Breast epithelium (tissue), 4 donors: ENCODE measurements at regions of chr10 and their contacts with region 1.

Region 1: DNA sequence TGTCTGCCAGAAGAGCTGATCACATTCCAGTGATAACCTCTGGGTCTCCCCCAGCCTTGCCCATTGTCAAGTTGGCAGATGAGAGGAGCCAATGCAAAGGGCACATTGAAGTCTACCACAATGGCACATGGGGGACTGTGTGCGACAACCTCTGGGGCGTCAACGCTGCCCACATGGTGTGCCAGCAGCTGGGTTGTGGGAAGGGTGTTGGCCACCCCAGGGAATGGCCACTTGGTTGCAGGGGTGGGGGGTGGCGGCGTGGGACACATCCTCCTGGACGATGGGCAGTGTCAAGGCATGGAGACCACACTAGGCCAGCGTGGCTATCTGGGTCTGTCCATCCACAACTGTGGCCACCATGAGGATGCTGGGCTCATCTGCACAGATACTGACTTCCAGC is 43.4 kb downstream of the CUZD1 start:
- DNase-seq: no peak
- H3K4me3 ChIP-seq: no peak overlapping the region
- H3K27ac ChIP-seq: no peak overlapping the region
- H3K4me1 ChIP-seq: no peaks in the 10 kb centered on the region
- H3K27me3 ChIP-seq: no peaks in the 10 kb centered on the region
- CTCF ChIP-seq: no peak
- POLR2A ChIP-seq: no peak

Region 2: GRCh38 chr10:122822973-122823690 is 20.9 kb after region 1 on chr10:
- intact Hi-C with region 1: no loop called
- DNase-seq: no peak
- H3K4me3 ChIP-seq: no peak overlapping the region
- H3K27ac ChIP-seq: no peak overlapping the region
- H3K4me1 ChIP-seq: no peaks in the 10 kb centered on the region
- H3K27me3 ChIP-seq: peaks cover 0 to 23% of the 10 kb centered on the region in 2 donors
- CTCF ChIP-seq: no peak
- POLR2A ChIP-seq: no peak

Region 3: DNA sequence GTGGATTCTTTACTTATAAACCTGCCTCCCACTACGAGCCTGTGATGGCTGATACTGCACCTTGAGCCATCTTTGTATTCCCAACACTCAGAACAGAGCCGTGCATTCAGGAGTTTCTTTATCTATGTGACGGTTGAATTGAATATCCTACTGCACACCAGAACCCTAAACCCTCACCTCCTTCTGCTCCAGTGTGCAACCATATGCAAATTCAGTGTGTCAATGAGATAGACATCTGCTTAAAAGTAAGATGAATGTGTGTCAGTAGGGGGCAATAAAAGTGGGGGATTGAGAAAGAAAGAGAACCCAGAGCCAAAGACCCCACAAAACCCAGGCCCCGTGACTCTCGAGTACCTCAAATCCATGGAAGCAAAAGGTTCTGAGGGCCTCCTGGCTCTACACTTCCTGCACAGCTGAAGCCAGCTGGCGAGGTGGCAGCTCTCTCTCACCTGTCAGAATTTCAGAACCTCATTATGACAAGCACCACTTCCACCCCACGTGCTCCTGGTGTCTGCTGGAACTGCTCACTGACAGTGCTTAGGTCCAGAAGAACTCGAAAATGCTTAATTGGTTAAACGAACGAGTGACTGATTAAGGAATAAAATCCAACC is 720.5 kb after region 1 on chr10:
- intact Hi-C with region 1: loop called (anchors 10 kb)
- DNase-seq: no peak
- H3K4me3 ChIP-seq: no peak overlapping the region
- H3K27ac ChIP-seq: no peak overlapping the region
- H3K4me1 ChIP-seq: no peaks in the 10 kb centered on the region
- H3K27me3 ChIP-seq: no peaks in the 10 kb centered on the region
- CTCF ChIP-seq: no peak
- POLR2A ChIP-seq: no peak